Right cardiac atrium (tissue), 5 donors: ENCODE measurements at regions of chr15 and their contacts with region 1.

Region 1: DNA sequence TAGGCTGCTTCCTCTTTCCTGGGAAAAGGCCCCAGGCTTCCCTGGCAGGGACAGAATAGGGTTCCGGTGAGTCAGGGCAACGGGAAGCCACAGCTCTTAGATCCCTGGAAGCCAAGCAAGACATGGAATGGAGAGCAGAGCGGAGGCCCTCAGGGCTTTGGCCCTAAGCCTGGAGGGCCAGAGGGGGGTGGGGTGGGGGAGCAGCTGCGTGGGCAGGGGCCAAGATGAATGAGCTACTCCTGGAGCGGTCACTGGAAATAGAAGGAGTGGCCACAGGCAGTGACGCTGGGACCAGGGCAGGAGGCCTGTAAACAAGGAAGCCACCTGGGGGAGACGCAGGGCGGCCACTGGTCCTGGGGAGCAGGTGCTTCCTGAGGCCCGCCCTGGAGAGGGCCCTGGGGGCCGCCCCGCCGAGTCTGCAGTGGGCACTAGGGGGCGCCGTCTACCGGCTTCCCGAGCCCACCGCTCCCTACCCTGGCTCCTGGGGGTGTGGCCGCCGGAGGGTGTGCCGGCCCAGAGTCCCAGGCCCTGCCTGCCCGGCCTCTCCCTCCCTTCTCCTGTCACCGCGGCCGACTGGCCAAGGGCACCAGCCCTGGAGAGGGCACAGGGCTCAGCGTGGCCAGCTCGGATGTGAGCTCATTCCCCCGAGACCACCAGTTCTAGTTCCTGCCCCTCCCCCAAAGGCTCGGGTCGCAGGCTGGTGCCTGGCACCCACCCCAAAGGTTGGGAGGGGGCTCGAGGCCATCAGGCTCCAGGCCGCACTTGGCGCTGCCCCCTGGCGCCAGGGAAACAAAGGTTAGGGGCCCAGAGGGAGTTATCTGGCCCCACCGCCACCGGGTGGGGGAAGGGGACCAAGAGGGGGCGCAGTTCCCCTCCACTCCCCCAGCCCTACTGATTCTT is 12.1 kb downstream of the VPS18 start:
- DNase-seq: peak; percentile 88 to 96 (median 95)
- ATAC-seq: peak; percentile 90
- H3K4me3 ChIP-seq: peak overlapping the region; percentile 21
- H3K27ac ChIP-seq: peak overlapping the region; percentile 73
- H3K4me1 ChIP-seq: peaks cover 10% of the 10 kb centered on the region
- H3K27me3 ChIP-seq: no peaks in the 10 kb centered on the region

Region 2: DNA sequence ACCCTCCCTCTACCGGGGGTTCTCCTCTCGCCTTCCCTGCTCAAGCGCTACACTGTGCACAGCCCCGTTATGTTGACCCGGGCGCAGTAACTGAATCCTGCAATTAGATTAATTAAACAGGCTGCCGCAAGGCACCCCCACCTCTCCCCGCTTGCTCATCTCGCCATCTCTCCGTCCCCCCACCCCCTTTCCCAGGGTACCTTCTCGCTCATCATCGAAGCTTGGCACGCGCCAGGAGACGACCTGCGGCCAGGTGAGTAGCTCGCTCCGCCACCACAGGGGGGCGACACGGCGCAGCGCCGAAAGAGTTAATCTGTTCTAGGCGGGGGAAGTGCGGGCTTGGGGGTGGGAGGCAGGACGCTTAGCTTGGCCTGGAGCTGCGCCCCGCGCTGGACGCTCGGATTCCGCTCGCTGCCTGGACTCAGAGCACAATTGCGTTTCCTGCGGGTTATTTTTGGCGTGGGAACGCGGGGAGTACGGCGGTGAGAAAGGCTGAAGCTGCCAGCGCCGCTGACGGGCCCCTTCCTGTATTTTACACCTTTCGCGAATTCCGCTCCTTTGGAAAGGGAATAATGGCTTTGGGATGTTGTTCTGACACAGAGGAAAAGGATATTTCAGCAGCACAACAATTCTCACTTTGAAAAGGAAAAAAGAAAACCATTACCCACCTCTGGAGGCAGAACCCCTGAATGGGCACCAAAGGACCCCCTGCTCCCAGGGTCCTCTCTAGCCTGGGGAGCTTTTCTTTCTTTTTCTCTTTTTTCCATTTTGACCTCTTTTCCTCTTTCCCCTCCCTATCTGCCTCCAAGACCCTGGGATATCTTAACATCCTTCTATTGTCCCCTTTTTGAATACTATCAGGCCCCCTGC is 24.3 kb after region 1 on chr15:
- intact Hi-C with region 1: loop called in 1 of 4 experiments (anchors 2 kb)
- DNase-seq: peak; percentile 72 to 89 (median 86)
- ATAC-seq: peak; percentile 32 to 69
- H3K4me3 ChIP-seq: peak overlapping the region; percentile 65
- H3K27ac ChIP-seq: peak overlapping the region; percentile 27
- H3K4me1 ChIP-seq: peaks cover 2% of the 10 kb centered on the region
- H3K27me3 ChIP-seq: no peaks in the 10 kb centered on the region

Region 3: GRCh38 chr15:40941528-40942336 is 35.4 kb after region 1 on chr15:
- intact Hi-C with region 1: loop called in 2 of 4 experiments (anchors 2 to 5 kb)
- DNase-seq: peak; percentile 82 to 92 (median 92)
- ATAC-seq: peak; percentile 78
- H3K4me3 ChIP-seq: peak overlapping the region; percentile 70
- H3K27ac ChIP-seq: peak overlapping the region; percentile 81
- H3K4me1 ChIP-seq: peaks cover 7% of the 10 kb centered on the region
- H3K27me3 ChIP-seq: no peaks in the 10 kb centered on the region

Region 4: DNA sequence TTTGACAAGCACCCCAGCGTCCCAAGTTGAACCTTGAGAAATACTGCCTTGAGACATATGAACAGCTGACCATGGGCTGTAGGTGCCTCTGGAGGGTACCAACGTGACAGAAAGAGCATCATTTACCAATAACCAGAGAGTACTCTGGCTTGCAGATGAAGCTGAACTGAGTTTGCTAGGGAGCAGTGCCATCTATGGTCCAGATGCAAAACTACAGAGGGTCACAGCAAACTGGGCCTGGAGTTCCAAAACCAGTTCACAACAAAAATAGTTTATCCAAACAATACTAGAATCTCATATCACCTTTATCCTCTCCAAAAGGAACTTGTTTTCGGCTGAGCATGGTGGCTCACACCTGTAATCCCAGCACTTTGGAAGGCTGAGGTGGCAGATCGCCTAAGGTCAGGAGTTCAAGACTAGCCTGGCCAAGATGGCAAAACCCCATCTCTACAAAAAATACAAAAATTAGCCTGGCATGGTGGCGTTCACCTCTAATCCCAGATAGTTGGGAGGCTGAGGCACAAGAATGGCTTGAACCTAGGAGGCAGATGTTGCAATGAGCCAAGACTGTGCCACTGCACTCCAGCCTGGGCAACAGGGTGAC is 116.2 kb after region 1 on chr15:
- intact Hi-C with region 1: loop called (anchors 1 to 5 kb)
- DNase-seq: peak in 1 of 3 donors; percentile 17
- ATAC-seq: peak; percentile 48 to 69
- H3K4me3 ChIP-seq: no peak overlapping the region
- H3K27ac ChIP-seq: no peak overlapping the region
- H3K4me1 ChIP-seq: peaks cover 2% of the 10 kb centered on the region
- H3K27me3 ChIP-seq: no peaks in the 10 kb centered on the region

Region 5: DNA sequence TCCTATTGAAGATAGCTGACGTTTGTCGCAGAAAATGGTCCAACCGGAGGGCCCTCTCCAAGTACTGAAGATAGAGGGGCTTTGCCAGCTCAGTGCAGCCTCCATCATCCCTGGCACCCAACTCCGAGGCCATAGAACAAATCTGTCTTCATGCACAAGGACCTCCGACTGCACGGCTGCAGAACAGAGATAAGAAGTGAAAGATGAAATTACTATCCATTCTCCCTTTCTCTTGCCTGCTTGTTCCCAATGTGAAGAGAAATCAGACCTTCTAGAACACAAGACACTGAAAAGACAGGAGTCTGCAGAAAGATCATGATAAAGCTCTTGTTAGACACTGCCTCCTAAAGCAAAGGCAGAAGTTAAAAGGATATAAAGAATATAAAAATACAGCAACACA is 189.8 kb after region 1 on chr15:
- intact Hi-C with region 1: no loop called
- DNase-seq: no peak
- ATAC-seq: no peak
- H3K4me3 ChIP-seq: no peak overlapping the region
- H3K27ac ChIP-seq: no peak overlapping the region
- H3K4me1 ChIP-seq: peaks cover 2% of the 10 kb centered on the region
- H3K27me3 ChIP-seq: no peaks in the 10 kb centered on the region

Region 6: GRCh38 chr15:41180206-41180789 is 274.0 kb after region 1 on chr15:
- intact Hi-C with region 1: loop called in 2 of 4 experiments (anchors 2 to 5 kb)
- DNase-seq: no peak
- ATAC-seq: no peak
- H3K4me3 ChIP-seq: no peak overlapping the region
- H3K27ac ChIP-seq: no peak overlapping the region
- H3K4me1 ChIP-seq: no peaks in the 10 kb centered on the region
- H3K27me3 ChIP-seq: no peaks in the 10 kb centered on the region

Region 7: DNA sequence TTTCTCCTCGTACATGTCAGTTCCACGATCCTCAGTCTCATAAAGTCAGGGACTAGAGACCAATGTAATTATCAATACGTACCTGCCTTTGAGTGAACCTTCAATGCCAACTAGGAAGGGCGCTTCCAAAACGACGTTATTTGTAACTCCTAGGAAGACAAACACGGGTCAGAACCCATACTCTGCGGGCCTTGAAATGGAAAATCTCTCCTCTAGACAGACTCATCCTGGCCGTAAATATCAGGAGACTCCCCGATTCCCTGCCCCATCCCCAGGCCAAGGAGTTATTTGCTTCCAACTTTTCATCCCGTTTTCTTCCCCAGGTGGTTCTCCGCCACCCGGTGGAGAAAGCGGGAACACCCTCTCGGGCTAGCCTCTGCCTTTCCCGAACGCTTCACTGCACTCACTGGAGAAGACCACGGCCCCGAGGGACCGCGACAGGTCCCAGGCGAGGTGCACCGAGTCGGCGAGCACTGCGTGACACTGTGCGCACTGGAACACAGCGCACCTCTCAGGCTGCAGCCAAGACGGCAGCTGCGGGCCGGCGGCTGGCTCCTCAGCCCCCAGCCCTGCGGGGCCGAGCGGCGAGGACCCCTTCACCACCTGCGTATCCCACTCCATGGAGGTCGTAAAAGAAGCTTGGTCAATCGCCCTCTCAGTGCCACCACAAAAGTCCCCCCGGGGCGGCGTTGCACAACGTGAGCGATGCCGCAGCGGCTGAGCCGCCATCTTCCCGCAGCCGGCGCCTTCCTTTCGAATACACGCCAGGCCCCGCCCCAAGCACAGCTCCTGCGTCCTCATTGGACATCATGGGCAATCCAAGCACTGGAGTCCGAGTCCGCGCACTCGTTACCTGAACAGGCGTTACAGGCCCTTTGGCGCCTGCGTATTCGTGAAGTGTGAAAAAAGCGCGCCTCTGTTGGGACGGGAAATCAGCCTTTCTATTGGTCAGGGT is 425.8 kb after region 1 on chr15 and contains the start of gene OIP5:
- intact Hi-C with region 1: loop called in 1 of 4 experiments (anchors 5 kb)
- DNase-seq: peak; percentile 98 to 99 (median 98)
- ATAC-seq: peak; percentile 100
- H3K4me3 ChIP-seq: peak within 1 kb of the TSS; percentile 57
- H3K27ac ChIP-seq: peak within 1 kb of the TSS; percentile 15
- H3K4me1 ChIP-seq: no peaks in the 10 kb centered on the region
- H3K27me3 ChIP-seq: no peaks in the 10 kb centered on the region
- total RNA-seq, gene OIP5: 0.25 to 0.71 (median 0.49) TPM in 3 of 4 donors, not detected in the other